HEK293 (cell line): ENCODE measurements at regions of chr5 and their contacts with region 1.

Region 1: DNA sequence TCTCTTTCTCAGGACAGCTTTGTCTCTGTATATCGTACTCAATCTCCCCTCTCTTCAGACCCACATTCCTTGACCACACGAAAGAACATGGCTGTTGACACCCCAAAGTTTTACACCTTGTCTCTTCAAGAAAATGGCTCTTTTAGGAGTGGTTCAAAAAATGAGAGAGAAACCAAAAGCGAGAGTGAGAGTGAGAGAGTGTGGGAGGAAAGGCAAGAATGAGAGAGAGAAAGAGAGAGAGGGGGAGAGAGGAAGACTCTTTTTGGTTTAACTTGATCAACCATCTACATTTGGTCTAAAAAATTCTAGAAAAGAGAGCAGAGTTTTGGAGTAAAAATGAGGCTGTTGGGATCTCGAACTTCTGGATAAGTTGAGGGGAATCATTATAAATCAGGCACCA is 581.8 kb upstream of the WWC1 start:
- H3K4me3 ChIP-seq: no peak overlapping the region
- H3K27ac ChIP-seq: no peak overlapping the region
- H3K4me1 ChIP-seq: no peaks in the 10 kb centered on the region
- CTCF ChIP-seq: no peak

Region 2: GRCh38 chr5:167723254-167723871 is 13.7 kb after region 1 on chr5:
- CTCF ChIA-PET with region 1: interaction called, 13 read pairs
- POLR2A ChIA-PET with region 1: no interaction called
- H3K4me3 ChIP-seq: no peak overlapping the region
- H3K27ac ChIP-seq: no peak overlapping the region
- H3K4me1 ChIP-seq: no peaks in the 10 kb centered on the region
- CTCF ChIP-seq: peak; percentile 56